Heart right ventricle (tissue), 16 donors: ENCODE measurements at regions of chr6 and their contacts with region 1.

Region 1: GRCh38 chr6:68975064-68975463 is 340.0 kb downstream of the ADGRB3 start:
- DNase-seq: peak in 1 of 2 donors; percentile 27
- ATAC-seq: peak in 7 of 8 donors; percentile 38 to 92 (median 74)
- H3K4me3 ChIP-seq: no peak overlapping the region
- H3K27ac ChIP-seq: no peak overlapping the region
- H3K4me1 ChIP-seq: peaks cover 0 to 12% (median 0%) of the 10 kb centered on the region in 9 donors
- H3K27me3 ChIP-seq: no peaks in the 10 kb centered on the region
- CTCF ChIP-seq: peak in 8 of 9 donors; percentile 24 to 63 (median 40)

Region 2: DNA sequence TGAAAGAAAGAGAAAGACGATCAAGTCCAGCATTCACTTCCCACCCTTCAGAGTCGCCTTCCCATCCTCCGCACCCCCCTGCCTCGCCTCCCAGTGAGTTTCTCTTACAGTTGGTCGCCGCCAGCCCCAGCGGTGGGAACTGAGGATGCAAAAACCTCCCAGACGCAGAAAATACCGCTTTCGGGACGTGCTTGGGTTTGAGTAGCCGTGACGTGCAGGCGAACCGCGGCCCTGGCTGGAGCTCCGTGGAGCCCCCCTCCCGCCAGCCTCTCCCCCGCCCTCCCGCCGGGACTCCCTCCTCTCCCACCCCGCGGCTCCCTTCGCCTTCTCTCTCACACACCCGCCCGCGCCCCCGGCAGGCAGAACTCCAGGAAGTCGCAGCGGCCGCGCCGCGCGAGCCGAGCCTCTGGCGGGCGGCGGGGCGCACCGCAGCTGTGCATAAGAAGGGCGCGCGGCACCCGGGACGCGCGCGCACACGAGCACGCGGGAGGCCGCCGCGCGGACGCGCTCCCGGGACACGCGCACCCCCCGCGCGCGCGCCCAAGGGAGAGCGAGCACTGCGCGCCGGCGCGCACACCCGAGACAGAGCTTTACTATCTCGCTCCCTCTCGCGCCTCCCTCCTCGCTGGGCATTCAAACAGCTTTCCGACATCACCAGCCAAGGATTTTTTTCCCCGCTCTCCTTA is 340.2 kb before region 1 on chr6 and contains the start of gene ADGRB3:
- intact Hi-C with region 1: loop called in 1 of 10 experiments (anchors 10 kb)
- DNase-seq: peak; percentile 83 to 86
- ATAC-seq: peak; percentile 90 to 98 (median 93)
- H3K4me3 ChIP-seq: peak within 1 kb of the TSS; percentile 42 to 72 (median 66)
- H3K27ac ChIP-seq: peak within 1 kb of the TSS; percentile 34 to 82 (median 76)
- H3K4me1 ChIP-seq: peaks cover 0 to 27% (median 0%) of the 10 kb centered on the region in 9 donors
- H3K27me3 ChIP-seq: peaks cover 0 to 67% (median 10%) of the 10 kb centered on the region in 7 donors
- CTCF ChIP-seq: peak in 2 of 9 donors; percentile 21 to 39
- total RNA-seq, gene ADGRB3: 0.47 to 1.7 (median 0.79) TPM

Region 3: GRCh38 chr6:69138893-69139494 is 163.9 kb after region 1 on chr6:
- intact Hi-C with region 1: loop called in 2 of 10 experiments (anchors 5 kb)
- DNase-seq: peak; percentile 19 to 43
- ATAC-seq: peak; percentile 44 to 90 (median 87)
- H3K4me3 ChIP-seq: peak overlapping the region in 6 of 10 donors; percentile 2 to 21 (median 18)
- H3K27ac ChIP-seq: peak overlapping the region; percentile 32 to 87 (median 78)
- H3K4me1 ChIP-seq: peaks cover 0 to 30% (median 0%) of the 10 kb centered on the region in 9 donors
- H3K27me3 ChIP-seq: no peaks in the 10 kb centered on the region
- CTCF ChIP-seq: no peak

Region 4: DNA sequence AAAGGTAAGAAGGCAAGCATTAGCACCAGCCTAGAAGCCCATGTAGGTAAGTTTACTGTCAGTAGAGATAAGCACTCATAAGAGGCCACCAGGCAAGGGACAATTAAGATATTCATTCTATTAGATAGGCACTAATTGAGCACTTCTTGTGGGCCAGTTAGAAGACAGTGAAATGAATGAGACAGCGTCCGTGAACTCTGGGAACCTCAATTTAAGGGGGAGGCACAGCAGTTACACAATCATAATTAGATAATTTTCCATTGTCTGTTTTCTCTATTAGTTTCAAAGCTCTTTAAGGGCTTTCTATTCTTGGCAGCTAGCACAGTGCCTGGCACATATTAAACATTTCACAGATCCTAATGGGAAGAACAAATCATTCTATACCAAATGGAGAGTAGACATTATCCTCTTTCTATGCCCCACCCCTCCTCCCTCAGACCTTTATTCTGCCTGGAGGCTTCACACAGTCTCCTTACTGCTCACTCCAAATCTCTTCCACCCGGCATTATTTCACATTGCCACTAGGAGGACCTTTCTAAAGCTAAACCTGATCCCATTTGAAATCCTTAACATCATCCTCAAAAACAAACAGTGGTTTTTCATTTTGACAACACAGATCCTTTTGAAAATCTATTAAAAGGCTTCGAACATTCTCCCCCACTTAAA is 189.6 kb after region 1 on chr6:
- intact Hi-C with region 1: loop called in 1 of 10 experiments (anchors 10 kb)
- DNase-seq: no peak
- ATAC-seq: peak in 2 of 8 donors; percentile 26 to 61
- H3K4me3 ChIP-seq: no peak overlapping the region
- H3K27ac ChIP-seq: no peak overlapping the region
- H3K4me1 ChIP-seq: no peaks in the 10 kb centered on the region
- H3K27me3 ChIP-seq: no peaks in the 10 kb centered on the region
- CTCF ChIP-seq: peak in 6 of 9 donors; percentile 12 to 38 (median 24)

Region 5: DNA sequence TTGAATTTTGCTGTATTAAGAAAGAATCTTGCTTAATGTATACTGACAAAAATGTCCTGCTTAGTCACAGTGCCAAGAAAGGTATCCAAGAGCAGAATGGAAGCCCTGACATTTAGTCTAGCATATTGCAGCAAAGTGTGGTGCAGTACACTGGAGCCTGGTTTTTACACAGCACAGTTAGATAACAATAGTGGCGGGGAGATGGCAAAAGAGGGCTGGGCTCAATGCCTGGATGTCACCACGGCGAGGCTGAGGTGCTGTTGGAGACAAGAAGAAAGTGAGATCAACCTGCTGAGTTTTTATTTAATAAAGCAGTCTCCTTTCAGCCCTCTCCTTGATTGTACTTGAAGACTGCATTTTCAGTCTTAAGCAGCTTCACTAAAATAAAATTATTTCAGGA is 395.7 kb after region 1 on chr6:
- intact Hi-C with region 1: loop called in 1 of 10 experiments (anchors 10 kb)
- DNase-seq: peak; percentile 29 to 31
- ATAC-seq: peak in 7 of 8 donors; percentile 58 to 95 (median 90)
- H3K4me3 ChIP-seq: no peak overlapping the region
- H3K27ac ChIP-seq: no peak overlapping the region
- H3K4me1 ChIP-seq: peaks cover 0 to 4% (median 0%) of the 10 kb centered on the region in 9 donors
- H3K27me3 ChIP-seq: no peaks in the 10 kb centered on the region
- CTCF ChIP-seq: no peak

Region 6: DNA sequence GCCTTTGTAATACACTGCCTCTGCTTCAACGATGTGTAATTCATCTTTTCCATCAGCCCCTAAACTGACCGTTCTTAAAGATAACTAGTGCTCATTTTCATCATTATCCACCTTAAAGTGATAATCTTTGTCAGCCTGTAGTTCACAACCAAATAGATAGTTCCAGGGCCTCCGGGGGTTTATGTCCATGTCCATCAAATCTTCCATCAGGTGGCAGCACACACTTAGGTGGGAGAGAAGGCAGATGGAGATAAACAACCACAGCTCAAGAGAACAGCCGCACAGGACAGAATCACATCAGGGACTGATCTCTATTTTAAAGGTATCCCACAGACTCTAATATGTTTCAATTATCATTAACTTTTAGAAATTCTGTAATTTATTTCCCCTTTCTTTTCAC is 730.9 kb after region 1 on chr6:
- intact Hi-C with region 1: loop called in 2 of 10 experiments (anchors 10 kb)
- DNase-seq: no peak
- ATAC-seq: no peak
- H3K4me3 ChIP-seq: no peak overlapping the region
- H3K27ac ChIP-seq: no peak overlapping the region
- H3K4me1 ChIP-seq: no peaks in the 10 kb centered on the region
- H3K27me3 ChIP-seq: no peaks in the 10 kb centered on the region
- CTCF ChIP-seq: no peak

Region 7: GRCh38 chr6:69719602-69720193 is 744.6 kb after region 1 on chr6:
- intact Hi-C with region 1: loop called in 1 of 10 experiments (anchors 10 kb)
- DNase-seq: no peak
- ATAC-seq: no peak
- H3K4me3 ChIP-seq: no peak overlapping the region
- H3K27ac ChIP-seq: no peak overlapping the region
- H3K4me1 ChIP-seq: no peaks in the 10 kb centered on the region
- H3K27me3 ChIP-seq: no peaks in the 10 kb centered on the region
- CTCF ChIP-seq: peak in 6 of 9 donors; percentile 29 to 52 (median 42)